Breast epithelium (tissue), 4 donors: ENCODE measurements at regions of chr21 and their contacts with region 1.

Region 1: GRCh38 chr21:17869115-17869514 is 50.0 kb upstream of the C21orf91 start:
- DNase-seq: no peak
- H3K4me3 ChIP-seq: no peak overlapping the region
- H3K27ac ChIP-seq: no peak overlapping the region
- H3K4me1 ChIP-seq: no peaks in the 10 kb centered on the region
- H3K27me3 ChIP-seq: no peaks in the 10 kb centered on the region
- CTCF ChIP-seq: no peak
- POLR2A ChIP-seq: no peak

Region 2: GRCh38 chr21:17848228-17848627 is 20.9 kb before region 1 on chr21:
- intact Hi-C with region 1: no loop called
- DNase-seq: peak in 1 of 2 donors; percentile 18
- H3K4me3 ChIP-seq: no peak overlapping the region
- H3K27ac ChIP-seq: no peak overlapping the region
- H3K4me1 ChIP-seq: no peaks in the 10 kb centered on the region
- H3K27me3 ChIP-seq: no peaks in the 10 kb centered on the region
- CTCF ChIP-seq: no peak
- POLR2A ChIP-seq: no peak

Region 3: GRCh38 chr21:17931080-17931479 is 62.0 kb after region 1 on chr21:
- intact Hi-C with region 1: loop called (anchors 2 kb)
- DNase-seq: no peak
- H3K4me3 ChIP-seq: no peak overlapping the region
- H3K27ac ChIP-seq: no peak overlapping the region
- H3K4me1 ChIP-seq: no peaks in the 10 kb centered on the region
- H3K27me3 ChIP-seq: no peaks in the 10 kb centered on the region
- CTCF ChIP-seq: no peak
- POLR2A ChIP-seq: no peak